Activated CD4-positive, alpha-beta T cell treated with anti-CD3 and anti-CD28 coated beads for 36 hours (primary cell): ENCODE measurements at regions of chr17 and their contacts with region 1.

Region 1: GRCh38 chr17:59361916-59362810 is 30.7 kb downstream of the YPEL2 start:
- DNase-seq: peak; percentile 55
- ATAC-seq: peak; percentile 73
- H3K4me3 Mint-ChIP-seq: peak overlapping the region; percentile 60
- H3K27ac Mint-ChIP-seq: peak overlapping the region; percentile 96
- H3K4me1 Mint-ChIP-seq: peaks cover 78% of the 10 kb centered on the region
- H3K27me3 Mint-ChIP-seq: no peaks in the 10 kb centered on the region

Region 2: GRCh38 chr17:59220376-59221158 is 141.6 kb before region 1 on chr17 and contains the start of gene GDPD1:
- CTCF ChIA-PET with region 1: no interaction called
- POLR2A ChIA-PET with region 1: no interaction called
- intact Hi-C with region 1: loop called in 1 of 2 experiments (anchors 1 kb)
- DNase-seq: peak; percentile 99
- ATAC-seq: peak; percentile 99
- H3K4me3 Mint-ChIP-seq: peak within 1 kb of the TSS; percentile 93
- H3K27ac Mint-ChIP-seq: peak within 1 kb of the TSS; percentile 86
- H3K4me1 Mint-ChIP-seq: peaks cover 12% of the 10 kb centered on the region
- H3K27me3 Mint-ChIP-seq: no peaks in the 10 kb centered on the region
- total RNA-seq, gene GDPD1: 2.5 to 2.7 TPM

Region 3: GRCh38 chr17:59342681-59343131 is 19.5 kb before region 1 on chr17:
- CTCF ChIA-PET with region 1: interaction called, 6 read pairs
- POLR2A ChIA-PET with region 1: no interaction called
- intact Hi-C with region 1: loop called (anchors 1 kb)
- DNase-seq: peak; percentile 62
- ATAC-seq: peak; percentile 96
- H3K4me3 Mint-ChIP-seq: no peak overlapping the region
- H3K27ac Mint-ChIP-seq: peak overlapping the region; percentile 73
- H3K4me1 Mint-ChIP-seq: peaks cover 52% of the 10 kb centered on the region
- H3K27me3 Mint-ChIP-seq: no peaks in the 10 kb centered on the region

Region 4: GRCh38 chr17:59373555-59374495 is 11.7 kb after region 1 on chr17:
- CTCF ChIA-PET with region 1: interaction called, 15 read pairs
- POLR2A ChIA-PET with region 1: no interaction called
- intact Hi-C with region 1: no loop called
- DNase-seq: no peak
- ATAC-seq: peak; percentile 42
- H3K4me3 Mint-ChIP-seq: no peak overlapping the region
- H3K27ac Mint-ChIP-seq: peak overlapping the region; percentile 85
- H3K4me1 Mint-ChIP-seq: peaks cover 63% of the 10 kb centered on the region
- H3K27me3 Mint-ChIP-seq: no peaks in the 10 kb centered on the region

Region 5: GRCh38 chr17:59435238-59435637 is 73.1 kb after region 1 on chr17:
- CTCF ChIA-PET with region 1: interaction called, 6 read pairs
- POLR2A ChIA-PET with region 1: interaction called, 6 read pairs
- intact Hi-C with region 1: loop called (anchors 1 to 2 kb)
- DNase-seq: no peak
- ATAC-seq: peak; percentile 89
- H3K4me3 Mint-ChIP-seq: peak overlapping the region; percentile 47
- H3K27ac Mint-ChIP-seq: peak overlapping the region; percentile 87
- H3K4me1 Mint-ChIP-seq: peaks cover 63% of the 10 kb centered on the region
- H3K27me3 Mint-ChIP-seq: peaks cover 7% of the 10 kb centered on the region